ENCODE measurements at regions of chr9 and their contacts with region 1.

Region 1: DNA sequence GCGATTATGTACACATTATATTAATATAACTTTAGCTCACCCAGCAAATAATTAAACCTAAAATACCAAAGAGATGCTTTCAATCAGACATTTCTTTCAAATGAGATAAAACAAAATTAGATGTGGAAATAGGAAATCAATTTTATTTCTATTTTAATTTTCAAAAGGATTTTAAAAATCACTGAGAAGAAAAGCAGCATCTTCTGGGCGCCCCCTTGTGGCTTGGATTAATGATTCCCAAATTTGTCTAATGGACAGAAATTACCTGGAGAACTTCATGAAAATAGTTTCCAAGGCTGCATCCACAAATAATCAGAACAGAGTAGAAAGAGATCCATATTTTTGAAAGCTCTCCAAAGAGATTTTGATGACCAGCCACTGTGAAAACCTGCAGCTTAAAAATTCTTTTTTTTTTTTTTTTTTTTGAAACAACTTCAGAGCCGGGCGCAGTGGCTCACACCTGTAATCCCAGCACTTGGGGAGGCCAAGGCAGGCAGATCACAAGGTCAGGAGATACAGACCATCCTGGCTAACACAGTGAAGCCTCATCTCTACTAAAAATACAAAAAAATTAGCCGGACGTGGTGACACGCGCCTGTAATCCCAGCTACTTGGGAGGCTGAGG is 50.9 kb upstream of the CEMIP2 start:
- DNase-seq: peak; percentile 59
- H3K4me3 Mint-ChIP-seq: no peak overlapping the region
- H3K27ac Mint-ChIP-seq: no peak overlapping the region
- H3K4me1 Mint-ChIP-seq: peaks cover 18% of the 10 kb centered on the region
- H3K27me3 Mint-ChIP-seq: no peaks in the 10 kb centered on the region

Region 2: DNA sequence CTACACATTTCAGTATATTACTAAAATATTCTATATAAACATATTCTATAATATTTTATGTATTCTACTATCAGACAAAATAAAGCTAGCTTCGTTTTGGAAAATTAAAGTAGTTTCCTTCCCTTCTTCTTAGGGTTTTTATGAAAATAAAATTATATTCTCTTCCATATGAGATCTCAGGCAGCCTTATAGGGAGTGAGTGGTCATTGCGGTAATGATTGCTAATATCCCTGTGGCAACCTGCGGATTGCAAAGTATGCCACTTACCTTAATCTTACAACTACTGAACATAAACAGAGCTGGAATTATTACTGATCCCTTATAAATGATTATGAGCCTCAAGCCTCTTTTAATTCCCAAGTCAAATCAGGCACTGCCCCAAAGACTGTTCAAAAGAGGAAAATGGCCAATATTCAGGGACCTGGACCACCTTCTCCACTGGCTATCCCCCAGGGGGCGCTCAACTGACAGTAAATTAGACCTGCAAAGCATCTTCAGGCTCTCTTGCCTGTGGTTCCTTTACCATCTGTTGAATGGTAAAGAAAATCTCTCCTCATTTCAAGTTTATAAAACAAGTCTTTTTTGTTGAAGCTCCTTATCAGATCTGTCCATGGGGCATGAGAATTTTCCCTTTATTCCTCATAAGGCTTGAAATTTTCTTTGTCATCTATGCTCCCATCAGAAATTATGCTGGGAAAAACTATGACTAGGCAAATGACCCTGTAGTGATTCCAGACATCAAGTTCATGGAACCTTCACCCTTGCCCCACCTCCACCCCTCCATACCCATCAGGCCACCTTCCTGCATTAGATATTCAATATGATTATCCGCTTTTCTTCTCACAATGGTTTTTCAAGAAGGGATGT is 214.8 kb before region 1 on chr9:
- CTCF ChIA-PET with region 1: interaction called, 15 read pairs
- DNase-seq: peak; percentile 87
- H3K4me3 Mint-ChIP-seq: no peak overlapping the region
- H3K27ac Mint-ChIP-seq: no peak overlapping the region
- H3K4me1 Mint-ChIP-seq: no peaks in the 10 kb centered on the region
- H3K27me3 Mint-ChIP-seq: peaks cover 6% of the 10 kb centered on the region

Region 3: DNA sequence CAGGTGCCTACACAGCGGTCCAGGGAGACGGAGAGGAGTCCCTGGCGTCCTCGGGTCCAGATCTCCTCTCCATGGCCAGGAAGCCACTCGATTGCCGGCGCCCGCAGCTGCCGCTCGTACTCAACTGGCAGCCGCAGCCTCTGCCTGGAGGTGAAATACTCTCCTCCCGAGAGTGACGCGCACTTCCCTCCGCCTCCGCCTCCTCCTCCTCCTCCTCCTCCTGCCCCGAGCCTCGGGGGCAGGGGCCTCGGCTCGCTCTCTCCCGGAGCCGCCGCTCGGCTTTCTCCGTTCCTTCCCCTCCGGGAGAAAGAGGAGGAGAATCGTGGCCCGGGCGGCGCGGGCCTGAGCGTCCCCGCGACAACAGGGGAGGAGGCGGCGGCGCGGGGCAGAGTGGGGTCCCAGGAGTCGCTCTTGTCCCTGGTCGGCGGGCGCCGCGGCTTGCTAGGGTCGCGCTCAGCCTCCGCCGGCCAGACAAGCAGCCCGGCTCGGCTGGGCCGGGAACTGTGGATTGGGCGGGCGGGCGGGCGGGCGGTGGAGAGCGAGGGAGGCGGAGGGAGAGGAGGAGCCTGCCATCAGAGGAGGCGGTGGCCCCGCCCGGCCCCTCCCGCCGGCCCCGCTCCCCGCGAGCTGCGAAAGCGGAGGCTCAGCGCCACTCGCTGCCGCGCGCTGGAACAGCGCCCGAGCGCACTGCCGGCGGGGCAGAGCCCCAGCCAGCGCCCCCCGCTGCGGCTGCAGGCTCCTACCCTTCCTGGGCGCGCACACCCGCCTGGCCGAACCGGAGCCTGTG is 50.6 kb before region 1 on chr9 and contains the start of gene CEMIP2:
- CTCF ChIA-PET with region 1: interaction called, 14 read pairs
- DNase-seq: peak; percentile 94
- H3K4me3 Mint-ChIP-seq: peak within 1 kb of the TSS; percentile 89
- H3K27ac Mint-ChIP-seq: peak within 1 kb of the TSS; percentile 96
- H3K4me1 Mint-ChIP-seq: peaks cover 37% of the 10 kb centered on the region
- H3K27me3 Mint-ChIP-seq: no peaks in the 10 kb centered on the region

Region 4: GRCh38 chr9:71778085-71778484 is 41.1 kb before region 1 on chr9:
- CTCF ChIA-PET with region 1: interaction called, 27 read pairs
- DNase-seq: no peak
- H3K4me3 Mint-ChIP-seq: no peak overlapping the region
- H3K27ac Mint-ChIP-seq: no peak overlapping the region
- H3K4me1 Mint-ChIP-seq: peaks cover 44% of the 10 kb centered on the region
- H3K27me3 Mint-ChIP-seq: no peaks in the 10 kb centered on the region

Region 5: DNA sequence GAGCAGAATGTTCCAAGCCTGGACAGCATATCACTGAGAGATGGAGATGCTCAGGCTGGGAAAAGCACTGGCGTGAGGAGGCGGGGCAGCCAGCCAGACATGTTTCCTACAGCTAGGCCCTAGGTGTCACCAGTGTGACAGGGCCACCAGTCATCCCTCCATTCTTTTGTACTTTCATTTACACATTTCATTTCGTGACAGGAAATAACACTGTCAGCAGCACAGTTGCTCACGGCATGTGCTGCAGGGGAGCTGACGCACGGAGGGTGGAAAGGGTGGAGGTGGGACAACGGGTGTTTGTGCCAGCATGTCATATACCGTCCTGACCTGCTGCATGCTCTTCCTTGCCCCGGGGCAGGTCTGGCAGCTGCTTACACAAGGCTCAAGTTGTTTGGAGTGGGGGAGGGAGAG is 36.1 kb before region 1 on chr9:
- CTCF ChIA-PET with region 1: interaction called, 27 read pairs
- DNase-seq: peak; percentile 91
- H3K4me3 Mint-ChIP-seq: peak overlapping the region; percentile 54
- H3K27ac Mint-ChIP-seq: peak overlapping the region; percentile 99
- H3K4me1 Mint-ChIP-seq: peaks cover 48% of the 10 kb centered on the region
- H3K27me3 Mint-ChIP-seq: no peaks in the 10 kb centered on the region

Region 6: DNA sequence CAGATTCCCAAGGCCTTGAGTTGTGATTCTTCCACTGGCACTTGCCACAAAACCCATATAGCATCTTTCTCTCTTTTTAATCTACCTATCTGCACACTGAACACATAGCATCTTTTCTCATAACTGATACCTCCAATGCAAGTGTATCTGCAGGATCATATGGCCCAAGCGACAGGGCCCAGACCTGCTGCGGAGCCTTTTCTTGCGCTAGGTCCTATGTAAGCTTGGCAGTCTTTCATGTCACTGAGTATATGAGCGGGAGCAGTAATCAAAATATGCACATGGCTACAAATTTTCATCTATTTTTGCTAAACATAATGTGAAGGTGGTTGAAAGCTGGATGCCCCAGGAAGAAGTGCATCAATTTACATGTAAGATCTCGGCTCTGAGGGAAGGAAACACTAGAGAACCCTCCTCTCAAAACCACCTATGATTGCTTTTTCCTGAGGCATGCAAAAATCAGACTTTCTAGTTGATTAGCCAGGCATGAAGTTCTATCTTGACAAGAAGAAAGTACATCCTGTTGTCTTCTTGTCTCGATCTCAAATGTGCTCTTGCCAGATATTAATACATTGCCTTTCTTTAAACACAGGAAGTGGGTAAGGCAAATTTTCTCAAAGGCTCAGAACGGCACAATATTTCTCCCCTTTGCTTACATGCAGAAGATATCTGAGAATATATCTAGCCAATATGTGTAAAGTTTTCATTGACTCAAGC is 24.0 kb before region 1 on chr9:
- CTCF ChIA-PET with region 1: interaction called, 10 read pairs
- DNase-seq: no peak
- H3K4me3 Mint-ChIP-seq: peak overlapping the region; percentile 46
- H3K27ac Mint-ChIP-seq: peak overlapping the region; percentile 98
- H3K4me1 Mint-ChIP-seq: peaks cover 59% of the 10 kb centered on the region
- H3K27me3 Mint-ChIP-seq: no peaks in the 10 kb centered on the region

Region 7: DNA sequence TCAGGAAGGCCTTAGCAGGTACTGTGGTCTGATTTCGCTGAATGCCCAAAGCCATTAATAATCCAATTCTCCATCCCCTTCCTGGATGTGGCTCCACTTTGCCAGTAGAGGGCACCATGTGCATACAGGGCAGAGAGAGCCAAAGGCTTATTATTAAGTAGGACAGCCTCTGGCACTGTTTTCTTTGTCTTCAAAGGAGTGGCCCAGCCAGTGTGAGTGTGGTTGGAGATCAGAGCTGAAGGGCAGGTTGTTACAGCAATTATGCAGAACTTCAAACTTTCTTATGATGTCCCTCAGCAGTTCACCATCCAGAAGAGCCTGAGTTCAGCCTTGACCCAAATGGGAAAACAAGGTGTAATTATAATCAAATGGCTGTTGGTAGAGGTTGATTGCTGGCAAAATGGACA is 12.3 kb before region 1 on chr9:
- CTCF ChIA-PET with region 1: interaction called, 35 read pairs
- DNase-seq: peak; percentile 74
- H3K4me3 Mint-ChIP-seq: no peak overlapping the region
- H3K27ac Mint-ChIP-seq: no peak overlapping the region
- H3K4me1 Mint-ChIP-seq: peaks cover 6% of the 10 kb centered on the region
- H3K27me3 Mint-ChIP-seq: peaks cover 5% of the 10 kb centered on the region